MCF 10A (cell line): ENCODE measurements at regions of chr3 and their contacts with region 1.

Region 1: GRCh38 chr3:128680602-128681368 is 30.2 kb upstream of the RPN1 start:
- DNase-seq: peak; percentile 99
- H3K4me3 Mint-ChIP-seq: peak overlapping the region; percentile 93
- H3K27ac Mint-ChIP-seq: peak overlapping the region; percentile 97
- H3K4me1 Mint-ChIP-seq: peaks cover 13% of the 10 kb centered on the region
- H3K27me3 Mint-ChIP-seq: no peaks in the 10 kb centered on the region
- CTCF ChIP-seq: peak; percentile 98

Region 2: GRCh38 chr3:127984241-127984975 is 696.4 kb before region 1 on chr3:
- CTCF ChIA-PET with region 1: no interaction called
- POLR2A ChIA-PET with region 1: no interaction called
- intact Hi-C with region 1: no loop called
- DNase-seq: no peak
- H3K4me3 Mint-ChIP-seq: no peak overlapping the region
- H3K27ac Mint-ChIP-seq: no peak overlapping the region
- H3K4me1 Mint-ChIP-seq: no peaks in the 10 kb centered on the region
- H3K27me3 Mint-ChIP-seq: no peaks in the 10 kb centered on the region
- CTCF ChIP-seq: no peak

Region 3: GRCh38 chr3:128190501-128190900 is 490.3 kb before region 1 on chr3:
- CTCF ChIA-PET with region 1: no interaction called
- POLR2A ChIA-PET with region 1: no interaction called
- intact Hi-C with region 1: no loop called
- DNase-seq: no peak
- H3K4me3 Mint-ChIP-seq: no peak overlapping the region
- H3K27ac Mint-ChIP-seq: no peak overlapping the region
- H3K4me1 Mint-ChIP-seq: no peaks in the 10 kb centered on the region
- H3K27me3 Mint-ChIP-seq: no peaks in the 10 kb centered on the region
- CTCF ChIP-seq: no peak

Region 4: GRCh38 chr3:128650096-128651050 is 30.4 kb before region 1 on chr3 and contains the start of gene RPN1:
- CTCF ChIA-PET with region 1: interaction called, 6 read pairs
- POLR2A ChIA-PET with region 1: interaction called, 40 read pairs
- intact Hi-C with region 1: loop called (anchors 1 kb)
- DNase-seq: peak; percentile 94
- H3K4me3 Mint-ChIP-seq: peak within 1 kb of the TSS; percentile 80
- H3K27ac Mint-ChIP-seq: peak within 1 kb of the TSS; percentile 89
- H3K4me1 Mint-ChIP-seq: no peaks in the 10 kb centered on the region
- H3K27me3 Mint-ChIP-seq: no peaks in the 10 kb centered on the region
- CTCF ChIP-seq: no peak
- total RNA-seq, gene RPN1: 212 and 240 TPM in 2 replicates

Region 5: DNA sequence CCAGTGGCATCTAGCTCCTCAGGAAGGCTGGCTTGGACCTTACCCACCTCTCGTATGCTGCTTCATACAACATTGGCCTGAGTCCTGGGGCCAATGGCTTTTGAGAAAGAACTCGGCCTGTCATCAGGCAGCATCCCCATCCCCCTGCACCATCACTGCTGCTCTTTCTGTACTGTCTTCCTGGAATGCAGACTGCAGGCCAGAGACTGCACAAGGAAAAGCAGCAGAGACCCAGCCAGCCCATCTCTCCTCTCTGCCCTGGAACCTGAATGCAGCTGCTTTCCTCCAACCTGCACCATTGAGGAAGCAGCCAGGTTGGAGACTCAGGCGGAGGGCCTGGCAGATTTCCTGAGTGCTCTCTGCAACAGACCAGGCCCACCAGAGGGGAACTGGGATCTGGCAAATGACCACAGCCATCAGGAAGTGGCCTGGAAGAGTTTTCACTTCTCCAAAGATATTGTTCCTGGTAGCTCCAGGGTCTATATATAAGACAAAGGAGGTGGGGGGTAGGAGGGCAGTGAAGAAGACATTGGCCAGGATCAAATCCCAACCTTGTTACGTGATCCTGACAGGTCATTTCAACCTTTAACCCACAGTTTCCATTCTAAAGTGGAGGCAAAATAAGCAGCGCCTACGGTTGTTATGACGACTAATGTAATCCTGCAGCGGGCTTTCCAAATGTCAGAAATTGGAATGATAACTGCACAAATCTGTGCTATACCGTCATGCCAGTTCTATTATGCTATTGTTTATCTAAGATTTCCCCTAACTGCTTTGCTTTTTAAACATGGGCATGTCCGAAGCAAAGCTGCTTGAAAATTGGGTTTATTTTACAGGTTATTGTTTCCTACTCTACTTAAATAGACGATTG is 20.8 kb after region 1 on chr3:
- CTCF ChIA-PET with region 1: interaction called, 13 read pairs
- POLR2A ChIA-PET with region 1: interaction called, 3 read pairs
- intact Hi-C with region 1: no loop called
- DNase-seq: no peak
- H3K4me3 Mint-ChIP-seq: no peak overlapping the region
- H3K27ac Mint-ChIP-seq: no peak overlapping the region
- H3K4me1 Mint-ChIP-seq: no peaks in the 10 kb centered on the region
- H3K27me3 Mint-ChIP-seq: no peaks in the 10 kb centered on the region
- CTCF ChIP-seq: no peak

Region 6: GRCh38 chr3:128736601-128737000 is 55.8 kb after region 1 on chr3:
- CTCF ChIA-PET with region 1: interaction called, 21 read pairs
- POLR2A ChIA-PET with region 1: interaction called, 6 read pairs
- intact Hi-C with region 1: no loop called
- DNase-seq: peak; percentile 30
- H3K4me3 Mint-ChIP-seq: no peak overlapping the region
- H3K27ac Mint-ChIP-seq: no peak overlapping the region
- H3K4me1 Mint-ChIP-seq: peaks cover 25% of the 10 kb centered on the region
- H3K27me3 Mint-ChIP-seq: no peaks in the 10 kb centered on the region
- CTCF ChIP-seq: no peak

Region 7: GRCh38 chr3:128787256-128788240 is 106.8 kb after region 1 on chr3:
- CTCF ChIA-PET with region 1: interaction called, 16 read pairs
- POLR2A ChIA-PET with region 1: interaction called, 10 read pairs
- intact Hi-C with region 1: no loop called
- DNase-seq: peak; percentile 94
- H3K4me3 Mint-ChIP-seq: peak overlapping the region; percentile 5
- H3K27ac Mint-ChIP-seq: peak overlapping the region; percentile 80
- H3K4me1 Mint-ChIP-seq: peaks cover 42% of the 10 kb centered on the region
- H3K27me3 Mint-ChIP-seq: no peaks in the 10 kb centered on the region
- CTCF ChIP-seq: peak; percentile 36

Region 8: GRCh38 chr3:128804017-128804810 is 123.4 kb after region 1 on chr3:
- CTCF ChIA-PET with region 1: interaction called, 124 read pairs
- POLR2A ChIA-PET with region 1: interaction called, 5 read pairs
- intact Hi-C with region 1: no loop called
- DNase-seq: peak; percentile 16
- H3K4me3 Mint-ChIP-seq: peak overlapping the region; percentile 57
- H3K27ac Mint-ChIP-seq: no peak overlapping the region
- H3K4me1 Mint-ChIP-seq: peaks cover 31% of the 10 kb centered on the region
- H3K27me3 Mint-ChIP-seq: no peaks in the 10 kb centered on the region
- CTCF ChIP-seq: no peak